BJ (cell line): ENCODE measurements at regions of chr2 and their contacts with region 1.

Region 1: GRCh38 chr2:166057370-166058164 is 70.3 kb downstream of the SCN1A start:
- DNase-seq: no peak
- H3K4me3 ChIP-seq: no peak overlapping the region
- H3K27me3 ChIP-seq: no peaks in the 10 kb centered on the region
- CTCF ChIP-seq: peak; percentile 47

Region 2: DNA sequence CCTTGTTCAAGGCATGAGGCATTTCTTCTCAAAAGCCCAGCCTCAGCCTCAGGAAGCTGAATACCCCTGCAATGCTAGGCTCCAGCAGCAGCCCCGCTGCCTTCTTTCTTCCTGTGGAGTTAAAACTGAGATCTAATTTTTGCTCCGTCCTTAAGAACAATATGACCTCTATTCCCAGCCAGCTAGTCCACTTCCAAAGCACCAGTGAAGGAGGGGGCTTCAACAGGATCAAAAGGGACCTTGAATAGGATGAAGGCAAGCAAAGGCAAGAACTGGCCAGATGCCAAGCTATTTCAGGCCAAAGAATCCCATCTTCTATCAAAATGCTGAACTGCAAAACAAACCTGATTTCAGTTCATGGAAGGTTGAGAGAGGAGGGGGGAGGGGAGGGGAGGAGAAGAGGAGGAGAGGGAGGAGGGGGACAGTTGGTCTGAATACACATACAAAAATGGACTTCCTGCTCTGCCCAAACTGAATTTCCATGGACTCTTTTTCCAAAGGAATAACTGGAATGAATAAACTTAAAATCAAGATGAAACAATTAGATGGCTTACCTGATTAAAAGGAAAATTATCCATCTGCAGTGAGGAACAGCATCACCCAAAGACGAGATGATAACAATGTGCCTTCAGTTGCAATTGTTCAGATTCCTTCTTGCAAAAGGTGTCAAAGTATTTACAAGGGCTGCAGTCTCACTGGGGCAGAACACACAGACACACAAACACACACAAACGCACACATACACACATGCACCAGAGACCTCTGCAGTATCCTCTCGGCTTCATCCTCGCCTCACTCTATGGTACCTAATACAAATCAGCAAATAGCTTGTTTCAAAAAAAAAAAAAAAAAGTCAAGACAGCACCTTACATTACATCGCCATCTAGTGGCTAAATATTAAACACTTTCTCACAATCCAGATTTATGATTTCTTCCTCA is 69.9 kb after region 1 on chr2 and contains the start of gene SCN1A:
- CTCF ChIA-PET with region 1: interaction called, 133 read pairs
- POLR2A ChIA-PET with region 1: no interaction called
- DNase-seq: no peak
- H3K4me3 ChIP-seq: peak within 1 kb of the TSS; percentile 4; the same call in 1 of the 2 replicates
- H3K27me3 ChIP-seq: peaks cover 4% of the 10 kb centered on the region
- CTCF ChIP-seq: peak; percentile 57
- polyA plus RNA-seq, gene SCN1A: 0.28 and 0.88 TPM in 2 replicates

Region 3: DNA sequence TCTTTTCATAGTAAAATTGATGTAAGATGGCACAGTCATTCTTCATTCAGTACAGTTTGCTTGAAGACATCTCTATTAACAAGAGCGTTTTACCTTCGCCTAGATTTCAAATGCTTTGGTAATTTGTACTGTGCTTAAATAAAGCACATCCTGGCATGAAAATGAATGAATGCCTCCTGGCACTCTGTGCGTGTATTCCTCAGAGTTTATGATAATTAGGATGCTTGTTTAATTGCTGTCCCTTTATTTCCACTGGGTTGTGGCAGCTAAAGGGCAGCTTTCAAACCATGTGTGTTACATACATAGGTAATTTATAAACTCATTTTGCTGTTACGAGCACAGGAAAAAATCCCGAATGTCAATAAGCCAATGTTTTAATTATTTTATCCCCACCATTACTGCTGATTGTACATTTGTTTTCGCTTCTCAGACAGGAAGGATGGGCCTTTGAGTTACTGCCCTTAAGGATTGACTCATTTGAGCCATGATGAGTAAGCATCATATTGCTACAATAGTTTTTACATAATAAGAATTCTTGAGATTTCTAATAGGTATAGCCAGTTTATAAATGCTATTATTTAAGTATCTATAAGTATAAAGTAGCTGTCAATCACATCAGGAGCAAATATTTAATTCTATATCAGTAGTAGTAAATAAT is 1347.2 kb after region 1 on chr2:
- CTCF ChIA-PET with region 1: no interaction called
- POLR2A ChIA-PET with region 1: no interaction called
- DNase-seq: no peak
- H3K4me3 ChIP-seq: no peak overlapping the region
- H3K27me3 ChIP-seq: no peaks in the 10 kb centered on the region
- CTCF ChIP-seq: no peak